Activated T-helper 1 cell treated with anti-CD3 and anti-CD28 coated beads, Interleukin-12 subunit alpha, Interleukin-12 subunit beta, Interleukin-2, Interleukin-4 antibody, amounts not matched to agents 30 ng/mL and 10 ng/mL and 1 ng/mL, durations not matched to agents 14 hours and 24 hours and 36 hours (primary cell): ENCODE measurements at regions of chr3 and their contacts with region 1.

Region 1: DNA sequence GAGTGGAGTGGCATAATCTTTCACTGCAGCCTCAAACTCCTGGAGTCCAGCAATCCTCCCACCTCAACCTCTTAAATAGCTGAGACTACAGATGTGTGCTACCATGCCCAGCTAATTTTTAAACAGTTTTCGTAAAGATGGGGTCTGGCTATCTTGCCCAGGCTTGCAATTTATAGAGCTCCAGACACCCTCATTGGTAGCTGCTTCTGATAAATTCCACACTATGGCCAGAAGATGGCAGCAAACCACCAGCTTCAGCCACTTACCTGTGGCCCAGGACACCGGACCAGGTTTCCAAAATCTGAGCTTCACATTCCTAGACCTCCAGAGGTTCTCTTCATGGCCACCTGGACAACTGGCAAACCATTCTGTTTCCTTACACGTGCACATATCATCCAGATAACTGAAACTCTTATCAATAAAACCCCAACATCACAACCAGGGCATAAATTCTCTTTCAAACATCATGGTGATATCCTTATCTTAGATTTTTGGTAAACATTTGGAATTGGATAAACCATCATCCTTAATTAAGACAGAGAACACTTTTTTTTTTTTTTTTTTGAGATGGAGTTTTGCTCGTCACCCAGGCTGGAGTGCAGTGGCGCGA is 28.9 kb downstream of the FBXW12 start:
- DNase-seq: peak; percentile 44
- H3K4me3 Mint-ChIP-seq: no peak overlapping the region
- H3K27ac Mint-ChIP-seq: no peak overlapping the region
- H3K4me1 Mint-ChIP-seq: no peaks in the 10 kb centered on the region
- H3K27me3 Mint-ChIP-seq: no peaks in the 10 kb centered on the region

Region 2: GRCh38 chr3:48232734-48233133 is 168.2 kb before region 1 on chr3:
- intact Hi-C with region 1: loop called (anchors 1 kb)
- DNase-seq: peak; percentile 26
- H3K4me3 Mint-ChIP-seq: no peak overlapping the region
- H3K27ac Mint-ChIP-seq: no peak overlapping the region
- H3K4me1 Mint-ChIP-seq: peaks cover 10% of the 10 kb centered on the region
- H3K27me3 Mint-ChIP-seq: no peaks in the 10 kb centered on the region

Region 3: DNA sequence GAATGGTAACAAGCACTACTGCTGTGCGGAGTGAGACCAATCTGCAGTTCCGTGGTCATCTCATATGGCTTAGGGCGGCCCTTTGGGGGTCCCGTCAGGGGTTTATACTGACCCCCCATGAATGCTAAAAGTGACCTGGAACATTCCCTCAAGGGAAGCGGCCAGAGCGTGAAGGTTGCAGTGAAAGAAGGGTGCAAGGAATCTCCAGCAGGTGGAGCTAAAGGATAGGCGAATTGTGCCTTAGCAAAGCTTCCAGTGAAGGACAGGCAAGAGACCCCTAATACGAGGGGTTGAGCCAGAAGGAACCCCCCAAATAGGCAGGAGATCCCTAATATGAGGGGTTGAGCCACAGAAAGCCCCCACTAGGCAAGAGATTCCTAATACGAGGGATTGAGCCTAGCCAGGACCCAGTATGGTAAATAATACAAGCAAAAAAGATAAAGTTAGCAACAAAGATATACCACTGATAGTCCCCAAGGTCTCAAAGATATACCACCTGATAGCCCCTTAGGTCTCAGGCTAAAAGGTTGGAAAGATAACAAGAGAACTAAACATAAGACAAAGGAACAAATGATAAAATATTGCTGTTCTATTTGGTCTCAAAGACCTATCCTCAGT is 127.2 kb before region 1 on chr3:
- intact Hi-C with region 1: loop called (anchors 1 kb)
- DNase-seq: peak; percentile 35
- H3K4me3 Mint-ChIP-seq: no peak overlapping the region
- H3K27ac Mint-ChIP-seq: no peak overlapping the region
- H3K4me1 Mint-ChIP-seq: peaks cover 35% of the 10 kb centered on the region
- H3K27me3 Mint-ChIP-seq: no peaks in the 10 kb centered on the region

Region 4: DNA sequence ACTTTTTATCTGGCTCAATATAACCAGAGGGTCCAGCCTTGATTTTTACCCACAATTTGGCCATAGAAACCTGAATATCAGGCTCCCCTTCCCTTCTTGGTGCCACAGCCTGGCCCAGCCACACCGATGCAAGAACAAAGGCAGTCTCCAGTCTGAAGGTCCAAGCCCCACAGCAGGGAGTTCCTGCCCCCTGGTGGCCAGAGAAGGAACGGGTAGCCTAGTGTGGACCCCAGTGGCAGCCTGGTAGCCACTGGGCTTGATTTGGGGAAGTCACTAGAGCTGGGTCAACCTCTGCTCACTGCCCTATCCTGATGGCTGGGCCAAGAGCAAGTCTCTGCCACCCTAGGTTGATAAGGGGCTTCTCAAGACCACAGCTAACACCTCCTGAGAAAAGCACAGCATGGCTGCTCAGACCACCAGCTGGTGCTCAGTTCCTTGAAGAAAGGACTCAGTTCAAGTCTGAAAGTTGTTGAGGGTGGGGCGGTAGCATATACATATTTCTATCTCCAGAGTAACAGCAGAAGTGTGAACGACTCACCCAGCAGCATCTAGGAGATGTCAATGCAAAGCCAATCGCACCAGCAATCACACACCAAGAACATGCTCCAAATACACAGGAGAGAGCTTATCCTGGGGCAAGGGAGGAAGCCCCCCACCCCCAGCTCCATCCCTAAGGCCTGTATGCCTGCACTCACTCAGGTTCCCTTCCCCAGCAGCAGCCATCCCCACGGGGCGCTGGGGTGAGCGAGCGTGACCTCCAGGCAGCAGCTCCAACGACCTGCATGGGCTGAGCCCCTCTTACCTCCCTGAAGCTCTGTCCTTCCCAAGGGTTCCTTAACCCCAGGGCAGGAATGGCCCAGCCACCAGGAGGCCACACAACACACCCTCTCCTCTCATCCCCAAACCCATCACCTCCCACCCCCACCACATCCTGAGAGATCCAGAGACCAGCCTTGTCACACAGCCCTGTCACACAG is 148.1 kb after region 1 on chr3:
- intact Hi-C with region 1: loop called (anchors 1 kb)
- DNase-seq: peak; percentile 73
- H3K4me3 Mint-ChIP-seq: no peak overlapping the region
- H3K27ac Mint-ChIP-seq: no peak overlapping the region
- H3K4me1 Mint-ChIP-seq: peaks cover 32% of the 10 kb centered on the region
- H3K27me3 Mint-ChIP-seq: no peaks in the 10 kb centered on the region

Region 5: DNA sequence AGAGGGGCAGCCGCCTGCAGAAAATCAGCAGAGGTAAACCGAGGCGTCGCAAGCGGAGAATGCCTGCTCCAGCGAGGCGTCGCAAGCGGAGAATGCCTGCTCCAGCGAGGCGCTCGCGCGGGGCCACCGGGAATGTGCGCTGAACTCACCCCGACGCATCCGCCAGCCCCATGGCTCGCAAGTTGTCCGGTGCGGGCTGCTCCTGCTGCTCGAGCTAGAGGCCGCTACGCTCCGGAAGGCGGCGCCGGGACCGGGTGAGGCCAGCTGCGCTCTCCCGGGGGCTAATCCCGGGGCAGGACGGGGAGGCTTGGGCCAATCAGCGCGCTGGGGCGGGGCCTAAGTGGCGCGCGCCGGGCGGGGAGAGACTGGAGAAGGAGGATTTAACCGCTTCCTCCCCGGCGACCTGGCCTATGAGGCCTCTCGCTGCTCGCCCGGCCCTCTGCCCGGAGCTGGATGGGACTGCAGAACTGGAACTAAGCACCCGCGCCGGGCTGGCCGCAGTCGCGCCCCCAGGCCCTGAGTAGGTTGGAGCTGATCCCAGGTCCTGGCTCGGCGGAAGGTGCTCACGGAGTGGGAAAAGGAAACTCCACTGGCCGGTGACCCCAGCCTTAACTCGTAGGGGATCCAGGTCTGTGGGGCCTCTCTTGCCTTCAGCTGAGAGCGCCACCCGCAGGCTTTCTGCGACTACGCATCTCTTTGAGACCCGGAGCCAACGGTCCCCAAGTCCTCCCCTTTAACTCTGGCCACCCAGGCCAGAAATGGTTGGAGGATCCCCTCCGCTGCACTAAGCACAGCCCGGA is 234.5 kb after region 1 on chr3 and contains the start of gene SLC26A6:
- intact Hi-C with region 1: loop called (anchors 10 kb)
- DNase-seq: peak; percentile 96
- H3K4me3 Mint-ChIP-seq: peak within 1 kb of the TSS; percentile 89
- H3K27ac Mint-ChIP-seq: peak within 1 kb of the TSS; percentile 87
- H3K4me1 Mint-ChIP-seq: peaks cover 20% of the 10 kb centered on the region
- H3K27me3 Mint-ChIP-seq: no peaks in the 10 kb centered on the region
- total RNA-seq, gene SLC26A6: 46.3 and 52.8 TPM in 2 replicates